Naive thymus-derived CD4-positive, alpha-beta T cell (primary cell): ENCODE measurements at regions of chr1 and their contacts with region 1.

Region 1: DNA sequence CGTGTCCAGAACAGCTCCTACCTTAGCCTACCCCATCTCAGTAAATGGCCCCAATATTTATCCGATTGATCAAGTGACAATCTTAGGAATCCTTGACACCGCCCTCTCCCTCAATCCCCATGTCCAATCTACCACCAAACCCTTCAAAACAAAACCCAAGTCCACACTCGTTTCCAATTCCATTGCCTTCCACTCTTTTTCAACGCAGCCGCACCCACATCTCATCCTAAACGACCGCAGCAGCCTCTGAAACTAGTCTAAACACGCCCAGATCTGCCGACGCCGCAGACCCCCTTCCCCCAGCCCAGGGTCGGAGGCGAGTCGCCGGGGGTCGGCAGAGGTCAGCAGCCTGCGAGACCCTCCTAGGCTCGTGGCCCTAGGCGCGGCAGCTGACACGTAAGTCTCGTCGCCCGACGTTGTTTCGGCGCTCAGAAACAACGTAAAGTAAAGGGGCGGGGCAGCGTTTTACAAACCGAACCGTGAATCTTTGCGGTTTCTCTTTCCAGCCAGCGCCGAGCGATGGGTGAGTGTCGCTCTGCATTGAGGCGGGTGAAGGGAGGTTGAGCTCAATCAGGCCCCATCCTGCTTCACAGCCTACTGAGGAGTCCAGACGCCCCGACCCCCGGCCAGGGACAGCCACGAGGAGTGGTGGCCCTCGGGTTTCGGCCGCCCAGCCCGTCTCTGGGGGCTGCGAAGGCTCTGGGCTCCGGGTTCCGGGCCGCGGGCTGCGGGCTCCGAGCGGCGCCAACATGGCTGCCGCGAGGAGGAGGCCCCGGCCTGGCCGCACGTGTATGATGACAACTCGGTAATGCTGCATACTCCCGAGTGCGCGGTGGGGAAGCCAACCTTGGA is at the start of gene RPS8:
- DNase-seq: peak; percentile 77 to 92 (median 90)
- ATAC-seq: peak; percentile 91
- H3K4me3 ChIP-seq: peak within 1 kb of the TSS; percentile 99
- H3K4me3 Mint-ChIP-seq: peak within 1 kb of the TSS; percentile 88 to 99 (median 92)
- H3K27ac ChIP-seq: peak within 1 kb of the TSS; percentile 89
- H3K27ac Mint-ChIP-seq: peak within 1 kb of the TSS; percentile 91 to 98 (median 94)
- H3K4me1 ChIP-seq: peaks cover 6 to 19% of the 10 kb centered on the region in 2 donors
- H3K4me1 Mint-ChIP-seq: peaks cover 20 to 45% (median 38%) of the 10 kb centered on the region in 7 donors
- H3K27me3 ChIP-seq: no peaks in the 10 kb centered on the region
- H3K27me3 Mint-ChIP-seq: no peaks in the 10 kb centered on the region
- total RNA-seq, gene RPS8: 2,000 to 3,409 (median 3,025) TPM

Region 2: DNA sequence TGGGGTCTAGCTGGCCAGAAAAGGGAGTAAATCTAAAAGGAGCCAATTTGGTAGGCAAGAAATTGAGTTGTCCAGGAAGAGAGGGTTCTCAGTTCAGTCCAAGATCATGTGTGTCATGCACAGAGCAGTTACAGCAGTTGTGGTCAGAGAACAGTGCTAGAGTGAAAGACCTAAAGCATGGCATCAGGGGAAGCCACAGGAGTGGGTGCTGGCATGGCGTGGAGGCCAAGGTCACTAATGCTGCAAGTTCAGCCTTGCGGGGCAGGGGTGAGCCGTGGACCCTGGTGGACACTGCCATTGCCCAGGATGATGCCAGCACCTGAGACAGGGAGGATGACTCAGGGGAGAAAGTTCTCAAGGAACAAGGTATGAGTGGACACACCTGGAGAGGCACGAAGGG is 1522.1 kb before region 1 on chr1:
- CTCF ChIA-PET with region 1: no interaction called
- POLR2A ChIA-PET with region 1: no interaction called
- intact Hi-C with region 1: no loop called
- DNase-seq: no peak
- ATAC-seq: no peak
- H3K4me3 ChIP-seq: no peak overlapping the region
- H3K4me3 Mint-ChIP-seq: no peak overlapping the region
- H3K27ac ChIP-seq: no peak overlapping the region
- H3K27ac Mint-ChIP-seq: peak overlapping the region in 1 of 9 donors; percentile 46
- H3K4me1 ChIP-seq: no peaks in the 10 kb centered on the region
- H3K4me1 Mint-ChIP-seq: no peaks in the 10 kb centered on the region
- H3K27me3 ChIP-seq: no peaks in the 10 kb centered on the region
- H3K27me3 Mint-ChIP-seq: peaks cover 0 to 21% (median 0%) of the 10 kb centered on the region in 5 donors

Region 3: GRCh38 chr1:44714944-44715571 is 60.2 kb before region 1 on chr1:
- CTCF ChIA-PET with region 1: interaction called, 3 read pairs
- POLR2A ChIA-PET with region 1: interaction called, 47 read pairs
- intact Hi-C with region 1: loop called in 1 of 2 experiments (anchors 1 kb)
- DNase-seq: peak; percentile 46 to 77 (median 69)
- ATAC-seq: peak; percentile 98
- H3K4me3 ChIP-seq: peak overlapping the region; percentile 28
- H3K4me3 Mint-ChIP-seq: peak overlapping the region; percentile 24 to 72 (median 66)
- H3K27ac ChIP-seq: peak overlapping the region; percentile 39
- H3K27ac Mint-ChIP-seq: peak overlapping the region; percentile 40 to 85 (median 68)
- H3K4me1 ChIP-seq: peaks cover 11 to 37% of the 10 kb centered on the region in 2 donors
- H3K4me1 Mint-ChIP-seq: peaks cover 39 to 52% (median 47%) of the 10 kb centered on the region in 7 donors
- H3K27me3 ChIP-seq: no peaks in the 10 kb centered on the region
- H3K27me3 Mint-ChIP-seq: peaks cover 0 to 9% (median 0%) of the 10 kb centered on the region in 5 donors

Region 4: DNA sequence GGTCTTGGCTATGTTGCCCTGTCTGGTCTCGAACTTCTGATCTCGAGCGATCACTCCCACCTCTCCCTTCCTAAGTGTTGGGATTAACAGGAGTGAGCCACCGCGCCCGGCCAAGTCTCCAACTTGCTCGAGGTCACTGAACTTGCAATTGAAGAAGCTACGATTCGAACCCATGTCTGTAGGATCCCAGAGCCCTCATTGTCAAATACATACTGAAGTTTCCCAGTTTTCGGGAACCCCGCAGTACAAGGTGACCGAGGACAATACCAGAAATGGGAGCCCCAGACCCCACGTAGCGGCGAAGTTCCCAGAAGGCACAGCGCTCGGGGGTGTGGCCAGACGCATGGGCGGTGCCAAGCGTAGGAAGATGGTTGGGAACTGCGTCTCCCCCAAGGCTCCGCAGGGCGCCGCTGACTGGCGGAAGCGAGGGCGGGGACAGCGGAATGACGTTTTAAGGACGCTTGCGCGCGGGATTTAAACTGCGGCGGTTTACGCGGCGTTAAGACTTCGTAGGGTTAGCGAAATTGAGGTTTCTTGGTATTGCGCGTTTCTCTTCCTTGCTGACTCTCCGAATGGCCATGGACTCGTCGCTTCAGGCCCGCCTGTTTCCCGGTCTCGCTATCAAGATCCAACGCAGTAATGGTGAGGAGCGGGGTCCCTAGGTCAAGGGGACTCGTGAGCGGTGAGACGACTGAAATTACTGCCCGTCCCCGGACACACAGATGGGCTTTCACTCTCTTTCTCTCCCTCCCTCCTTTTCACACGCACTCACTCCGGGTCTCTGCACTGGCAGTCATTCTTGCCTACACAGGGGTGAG is 35.7 kb before region 1 on chr1 and contains the start of gene KIF2C:
- CTCF ChIA-PET with region 1: no interaction called
- POLR2A ChIA-PET with region 1: interaction called, 63 read pairs
- intact Hi-C with region 1: loop called (anchors 1 kb)
- DNase-seq: peak; percentile 87 to 96 (median 94)
- ATAC-seq: peak; percentile 100
- H3K4me3 ChIP-seq: peak within 1 kb of the TSS; percentile 79
- H3K4me3 Mint-ChIP-seq: peak within 1 kb of the TSS; percentile 84 to 99 (median 94)
- H3K27ac ChIP-seq: peak within 1 kb of the TSS; percentile 84
- H3K27ac Mint-ChIP-seq: peak within 1 kb of the TSS; percentile 86 to 97 (median 95)
- H3K4me1 ChIP-seq: peaks cover 5 to 7% of the 10 kb centered on the region in 2 donors
- H3K4me1 Mint-ChIP-seq: peaks cover 9 to 39% (median 19%) of the 10 kb centered on the region in 7 donors
- H3K27me3 ChIP-seq: no peaks in the 10 kb centered on the region
- H3K27me3 Mint-ChIP-seq: no peaks in the 10 kb centered on the region
- total RNA-seq, gene KIF2C: 0.32 to 69.3 (median 1.1) TPM

Region 5: DNA sequence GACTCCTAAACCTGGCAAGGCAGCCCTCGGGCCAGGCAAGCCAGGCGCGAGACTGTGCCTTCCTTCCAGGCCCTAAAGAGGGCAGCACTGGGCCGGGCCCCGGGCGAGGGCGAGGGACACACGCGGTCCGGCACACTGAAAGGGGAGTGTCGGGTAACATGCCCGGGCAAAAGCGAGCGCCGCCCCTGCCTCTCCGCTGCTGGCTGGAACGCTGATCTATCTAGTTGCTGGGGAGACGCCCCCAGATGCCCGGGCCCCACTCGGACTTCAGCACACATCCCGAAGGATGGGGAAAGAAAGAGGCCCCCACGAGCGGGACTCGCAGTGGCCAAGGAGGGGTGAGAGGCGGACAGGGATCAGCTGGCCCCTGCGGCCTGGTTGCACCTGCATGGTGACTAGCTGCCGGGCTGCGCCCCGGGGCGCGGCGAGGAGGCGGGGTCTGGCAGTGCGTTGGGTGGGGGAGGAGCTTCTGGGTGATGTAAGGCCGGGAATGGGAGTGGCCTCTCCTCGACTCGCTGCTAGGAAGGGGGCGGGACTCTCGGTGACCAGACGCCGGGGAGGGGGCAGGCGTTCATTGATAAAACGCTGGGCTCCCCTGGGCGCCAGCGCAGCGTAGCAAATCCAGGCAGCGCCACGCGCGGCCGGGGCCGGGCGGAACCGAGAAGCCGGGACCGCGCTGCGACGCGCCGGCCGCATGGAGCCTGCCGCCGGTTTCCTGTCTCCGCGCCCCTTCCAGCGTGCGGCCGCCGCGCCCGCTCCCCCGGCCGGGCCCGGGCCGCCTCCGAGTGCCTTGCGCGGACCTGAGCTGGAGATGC is 24.7 kb after region 1 on chr1 and contains the start of gene PLK3:
- CTCF ChIA-PET with region 1: interaction called, 8 read pairs
- POLR2A ChIA-PET with region 1: interaction called, 18 read pairs
- intact Hi-C with region 1: loop called (anchors 2 kb)
- DNase-seq: peak; percentile 93 to 99 (median 98)
- ATAC-seq: peak; percentile 92
- H3K4me3 ChIP-seq: peak within 1 kb of the TSS; percentile 66
- H3K4me3 Mint-ChIP-seq: peak within 1 kb of the TSS; percentile 85 to 98 (median 93)
- H3K27ac ChIP-seq: peak within 1 kb of the TSS; percentile 94
- H3K27ac Mint-ChIP-seq: peak within 1 kb of the TSS; percentile 84 to 99 (median 98)
- H3K4me1 ChIP-seq: peaks cover 17 to 24% of the 10 kb centered on the region in 2 donors
- H3K4me1 Mint-ChIP-seq: peaks cover 19 to 43% (median 33%) of the 10 kb centered on the region in 7 donors
- H3K27me3 ChIP-seq: no peaks in the 10 kb centered on the region
- H3K27me3 Mint-ChIP-seq: no peaks in the 10 kb centered on the region
- total RNA-seq, gene PLK3: 92.8 to 456 (median 142) TPM

Region 6: GRCh38 chr1:44819608-44820327 is 44.5 kb after region 1 on chr1:
- CTCF ChIA-PET with region 1: no interaction called
- POLR2A ChIA-PET with region 1: interaction called, 59 read pairs
- intact Hi-C with region 1: loop called (anchors 1 kb)
- DNase-seq: peak; percentile 75 to 91 (median 86)
- ATAC-seq: peak; percentile 86
- H3K4me3 ChIP-seq: peak overlapping the region; percentile 66
- H3K4me3 Mint-ChIP-seq: peak overlapping the region; percentile 91 to 96 (median 94)
- H3K27ac ChIP-seq: peak overlapping the region; percentile 92
- H3K27ac Mint-ChIP-seq: peak overlapping the region; percentile 99 to 100 (median 100)
- H3K4me1 ChIP-seq: peaks cover 0 to 21% of the 10 kb centered on the region in 2 donors
- H3K4me1 Mint-ChIP-seq: peaks cover 31 to 48% (median 45%) of the 10 kb centered on the region in 7 donors
- H3K27me3 ChIP-seq: no peaks in the 10 kb centered on the region
- H3K27me3 Mint-ChIP-seq: no peaks in the 10 kb centered on the region